Sigmoid colon (tissue), 7 donors: ENCODE measurements at regions of chr1 and their contacts with region 1.

Region 1: DNA sequence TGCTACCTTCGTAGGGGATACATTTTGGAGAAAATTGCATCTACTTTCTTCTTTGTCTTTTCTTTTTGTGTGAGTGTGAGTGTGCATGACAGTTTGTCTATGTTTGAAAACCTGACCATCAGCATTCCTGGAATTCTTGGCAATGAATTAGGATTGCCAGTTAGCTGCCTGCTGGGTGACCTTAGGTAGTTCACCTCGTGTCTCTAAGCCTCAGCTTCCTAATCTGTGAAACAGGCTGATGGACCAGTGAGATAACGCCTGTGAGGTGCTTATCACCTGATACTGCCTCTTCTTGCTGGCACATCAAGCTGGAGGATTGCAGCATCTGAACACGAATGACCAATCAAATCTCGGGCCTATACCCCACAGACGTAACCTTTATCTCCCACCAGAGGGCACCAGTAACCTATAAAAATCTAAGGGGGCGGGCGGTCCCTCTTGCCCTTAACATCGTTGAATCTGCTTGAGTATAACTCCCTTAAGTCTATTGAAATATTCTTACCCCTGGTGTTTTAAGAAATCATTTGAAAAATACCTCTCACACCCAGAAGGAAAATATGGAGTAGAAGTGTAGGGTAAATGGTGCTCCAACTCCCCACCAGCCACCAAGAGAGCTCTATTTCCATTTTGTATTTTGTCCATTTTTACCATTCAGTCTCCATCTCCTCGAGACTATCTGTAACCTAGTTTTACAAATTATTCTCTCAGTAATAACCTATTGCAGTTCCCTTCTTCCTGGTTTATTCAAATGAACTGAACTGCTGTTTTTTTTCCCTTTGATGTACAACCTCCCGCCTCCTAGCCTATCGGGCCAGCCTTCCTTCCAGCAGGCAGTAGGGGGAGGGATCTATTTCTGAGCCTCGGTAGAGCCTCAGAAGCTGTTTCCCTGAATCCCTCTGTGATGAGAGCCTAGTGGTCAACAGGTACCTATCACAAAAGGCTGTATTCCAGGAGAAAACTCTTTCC is 49.7 kb downstream of the MDM4 start:
- DNase-seq: peak; percentile 79
- H3K4me3 ChIP-seq: no peak overlapping the region
- H3K27ac ChIP-seq: no peak overlapping the region
- H3K4me1 ChIP-seq: peaks cover 0 to 17% (median 12%) of the 10 kb centered on the region in 4 donors
- H3K27me3 ChIP-seq: no peaks in the 10 kb centered on the region
- CTCF ChIP-seq: peak; percentile 52 to 71 (median 66)
- EP300 ChIP-seq: no peak
- POLR2A ChIP-seq: no peak

Region 2: GRCh38 chr1:204685236-204686006 is 119.5 kb after region 1 on chr1 and contains the start of gene LRRN2:
- intact Hi-C with region 1: loop called (anchors 5 kb)
- DNase-seq: peak; percentile 75
- H3K4me3 ChIP-seq: peak within 1 kb of the TSS; percentile 58 to 81 (median 74)
- H3K27ac ChIP-seq: peak within 1 kb of the TSS; percentile 67 to 72 (median 70)
- H3K4me1 ChIP-seq: peaks cover 0 to 24% (median 22%) of the 10 kb centered on the region in 4 donors
- H3K27me3 ChIP-seq: no peaks in the 10 kb centered on the region
- CTCF ChIP-seq: no peak
- EP300 ChIP-seq: no peak
- POLR2A ChIP-seq: no peak
- total RNA-seq, gene LRRN2: 4.9 to 14.7 (median 6.7) TPM

Region 3: GRCh38 chr1:204746838-204747442 is 181.0 kb after region 1 on chr1:
- intact Hi-C with region 1: loop called (anchors 5 kb)
- DNase-seq: no peak
- H3K4me3 ChIP-seq: no peak overlapping the region
- H3K27ac ChIP-seq: no peak overlapping the region
- H3K4me1 ChIP-seq: no peaks in the 10 kb centered on the region
- H3K27me3 ChIP-seq: no peaks in the 10 kb centered on the region
- CTCF ChIP-seq: peak; percentile 56 to 97 (median 70)
- EP300 ChIP-seq: no peak
- POLR2A ChIP-seq: no peak

Region 4: DNA sequence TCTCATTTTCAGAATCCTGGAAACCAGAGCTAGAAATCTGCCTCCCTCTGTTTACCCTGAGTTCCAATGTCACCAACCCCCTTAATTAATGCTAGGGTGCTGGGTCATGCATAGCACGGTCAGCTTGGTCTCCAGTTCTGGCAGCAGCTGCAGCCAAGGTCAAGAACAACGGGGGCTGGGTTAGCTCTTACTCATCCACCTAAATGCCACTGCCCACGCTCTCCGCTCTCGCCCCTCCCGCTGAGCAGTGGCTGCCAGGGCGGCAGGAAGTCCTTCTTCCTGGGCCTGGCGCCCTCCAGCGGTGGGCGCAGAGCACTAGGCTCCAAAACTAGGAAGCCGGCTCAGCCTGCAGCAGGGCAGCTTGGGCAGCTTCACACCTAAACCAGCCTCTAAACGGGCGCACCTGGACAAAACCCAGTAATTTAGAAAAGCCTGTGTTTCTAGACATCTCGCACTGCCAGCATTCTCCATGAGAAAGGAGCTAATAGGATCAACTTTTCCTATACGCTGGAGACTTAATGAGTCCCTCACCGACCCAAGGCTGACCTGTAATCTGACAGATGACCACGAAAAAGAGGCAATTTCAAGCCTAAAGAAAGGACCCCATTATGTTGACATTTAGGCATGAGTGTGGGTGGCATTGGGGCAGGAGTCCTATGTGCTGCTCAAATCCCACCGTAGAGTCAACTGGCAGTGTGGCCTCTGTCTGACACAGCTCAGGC is 198.0 kb after region 1 on chr1:
- intact Hi-C with region 1: loop called (anchors 1 kb)
- DNase-seq: peak; percentile 82
- H3K4me3 ChIP-seq: no peak overlapping the region
- H3K27ac ChIP-seq: no peak overlapping the region
- H3K4me1 ChIP-seq: peaks cover 0 to 12% (median 11%) of the 10 kb centered on the region in 4 donors
- H3K27me3 ChIP-seq: peaks cover 0 to under 1% (median 0%) of the 10 kb centered on the region in 3 donors
- CTCF ChIP-seq: peak; percentile 55 to 84 (median 76)
- EP300 ChIP-seq: no peak
- POLR2A ChIP-seq: no peak

Region 5: GRCh38 chr1:204806943-204807687 is 241.2 kb after region 1 on chr1:
- intact Hi-C with region 1: loop called (anchors 1 kb)
- DNase-seq: peak; percentile 89
- H3K4me3 ChIP-seq: peak overlapping the region; percentile 18 to 48 (median 42)
- H3K27ac ChIP-seq: peak overlapping the region in 2 of 4 donors; percentile 7 to 51
- H3K4me1 ChIP-seq: peaks cover 0 to 17% (median 4%) of the 10 kb centered on the region in 4 donors
- H3K27me3 ChIP-seq: no peaks in the 10 kb centered on the region
- CTCF ChIP-seq: peak; percentile 94 to 97 (median 96)
- EP300 ChIP-seq: no peak
- POLR2A ChIP-seq: no peak

Region 6: GRCh38 chr1:204941421-204942338 is 375.8 kb after region 1 on chr1:
- intact Hi-C with region 1: loop called (anchors 5 kb)
- DNase-seq: peak; percentile 81
- H3K4me3 ChIP-seq: no peak overlapping the region
- H3K27ac ChIP-seq: peak overlapping the region in 2 of 4 donors; percentile 58
- H3K4me1 ChIP-seq: peaks cover 0 to 17% (median 7%) of the 10 kb centered on the region in 4 donors
- H3K27me3 ChIP-seq: no peaks in the 10 kb centered on the region
- CTCF ChIP-seq: peak; percentile 74 to 94 (median 90)
- EP300 ChIP-seq: no peak
- POLR2A ChIP-seq: no peak